Activated CD4-positive, alpha-beta T cell treated with anti-CD3 and anti-CD28 coated beads, Interleukin-2, amount 10 ng/mL, durations not matched to agents 7 days and 5 days (primary cell): ENCODE measurements at regions of chr5 and their contacts with region 1.

Region 1: DNA sequence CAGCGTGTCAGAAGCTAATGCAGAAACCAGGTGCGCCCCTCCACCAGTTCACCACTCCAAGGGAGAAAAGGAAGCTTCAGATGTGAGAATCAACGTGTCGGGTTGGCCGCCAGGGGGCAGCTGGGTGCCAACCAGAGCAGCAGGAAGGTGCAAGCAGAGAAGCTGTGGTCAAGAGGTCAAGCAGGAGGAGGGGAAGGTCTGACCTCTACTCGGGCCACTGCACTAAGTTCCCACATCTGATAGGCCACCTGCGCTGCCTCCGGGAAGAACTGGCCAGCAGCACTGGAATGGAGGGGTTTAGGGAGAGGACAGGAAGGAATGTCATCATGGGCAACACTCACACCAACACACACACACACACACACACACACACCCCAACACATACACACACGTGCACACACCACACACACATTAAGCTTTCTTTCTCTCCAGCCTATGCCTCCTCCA is 31.4 kb downstream of the ANXA6 start:
- DNase-seq: peak; percentile 70
- H3K4me3 Mint-ChIP-seq: no peak overlapping the region
- H3K27ac Mint-ChIP-seq: peak overlapping the region; percentile 79
- H3K4me1 Mint-ChIP-seq: peaks cover 42% of the 10 kb centered on the region
- H3K27me3 Mint-ChIP-seq: no peaks in the 10 kb centered on the region

Region 2: DNA sequence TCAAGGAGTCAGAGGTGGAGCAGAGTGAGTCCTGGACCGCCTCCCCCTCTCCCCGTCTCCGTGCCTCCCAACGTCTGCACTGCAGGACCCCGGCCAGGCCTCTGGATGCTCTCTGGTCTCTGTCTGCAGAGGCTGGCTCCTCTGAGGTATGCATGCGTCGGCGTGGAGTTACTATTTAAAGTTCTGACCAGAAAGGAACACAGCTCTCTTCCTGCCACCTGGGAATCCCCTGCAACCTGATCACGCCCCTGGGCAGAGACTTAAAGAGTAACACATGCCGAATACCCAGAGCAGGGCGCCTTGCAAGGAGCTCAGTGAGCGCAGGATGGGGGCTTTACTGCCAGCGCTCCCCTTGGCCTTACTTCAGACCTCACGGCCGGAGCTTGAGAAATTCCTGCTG is 15.3 kb after region 1 on chr5:
- CTCF ChIA-PET with region 1: interaction called, 29 read pairs
- POLR2A ChIA-PET with region 1: no interaction called
- DNase-seq: peak; percentile 61
- H3K4me3 Mint-ChIP-seq: peak overlapping the region; percentile 45
- H3K27ac Mint-ChIP-seq: peak overlapping the region; percentile 76
- H3K4me1 Mint-ChIP-seq: peaks cover 83% of the 10 kb centered on the region
- H3K27me3 Mint-ChIP-seq: no peaks in the 10 kb centered on the region

Region 3: DNA sequence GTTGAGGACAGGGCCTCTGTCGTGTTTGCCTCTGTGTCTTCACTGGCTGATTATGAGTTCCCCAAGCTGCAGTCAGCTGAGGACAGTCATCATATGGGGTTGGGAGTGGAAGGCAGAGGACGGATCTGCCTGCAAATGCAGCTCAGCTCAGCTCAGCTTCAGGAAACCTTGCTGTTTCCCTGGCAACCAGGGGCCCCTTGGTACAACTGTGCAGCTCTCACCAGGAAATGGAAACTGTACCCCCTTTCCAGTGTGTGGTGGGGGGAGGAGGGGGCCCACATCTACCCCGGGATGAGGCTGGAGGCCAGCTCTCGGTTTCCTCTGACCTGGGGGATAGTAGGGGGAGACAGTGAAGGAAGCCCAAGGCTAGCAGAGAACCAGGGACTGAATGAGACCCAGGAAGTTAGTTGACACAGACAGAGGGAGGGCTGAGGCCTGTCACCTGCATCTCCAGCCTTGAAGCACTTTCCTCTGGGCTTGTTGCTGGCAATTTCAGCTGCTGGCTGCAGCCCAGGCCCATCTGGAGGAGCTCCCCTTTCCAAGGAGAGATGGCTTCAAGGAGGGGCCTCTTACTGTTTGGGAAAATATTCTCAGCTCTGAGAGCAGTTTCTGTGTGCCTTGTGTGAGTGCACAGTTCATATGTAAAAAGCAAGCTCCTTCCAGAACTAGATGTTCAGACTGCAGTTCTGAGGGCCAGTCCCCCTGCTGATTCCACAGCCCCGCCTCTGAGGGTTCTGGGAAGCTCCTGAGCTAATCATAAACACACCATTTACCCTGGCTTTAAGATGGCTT is 24.4 kb after region 1 on chr5:
- CTCF ChIA-PET with region 1: interaction called, 20 read pairs
- POLR2A ChIA-PET with region 1: interaction called, 3 read pairs
- DNase-seq: peak; percentile 88
- H3K4me3 Mint-ChIP-seq: peak overlapping the region; percentile 53
- H3K27ac Mint-ChIP-seq: peak overlapping the region; percentile 93
- H3K4me1 Mint-ChIP-seq: peaks cover 89% of the 10 kb centered on the region
- H3K27me3 Mint-ChIP-seq: no peaks in the 10 kb centered on the region